ENCODE measurements at regions of chr13 and their contacts with region 1.

Region 1: DNA sequence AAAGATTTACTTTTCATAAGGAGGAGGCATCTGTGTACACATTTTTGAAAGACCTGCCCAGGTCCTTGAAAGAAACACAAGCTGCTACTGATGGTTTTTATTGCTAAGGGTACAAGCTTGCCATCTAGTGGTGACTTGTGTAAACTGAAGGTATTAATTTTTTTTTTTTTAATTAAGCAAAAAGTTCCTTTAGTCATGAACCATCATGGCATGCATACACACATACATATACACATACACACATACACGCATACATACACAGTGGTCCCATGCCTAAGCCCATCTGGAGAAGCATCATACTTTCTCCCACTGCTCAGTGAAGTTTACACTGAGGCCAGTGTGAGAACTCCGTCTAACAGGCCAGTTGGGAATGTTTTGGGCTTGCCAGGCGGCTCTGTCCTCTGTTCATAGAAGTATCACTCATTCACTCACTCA is 312.5 kb downstream of the DCLK1 start:
- DNase-seq: no peak
- ATAC-seq: peak; percentile 32; the same call in 1 of the 3 replicates
- H3K4me3 ChIP-seq: no peak overlapping the region
- H3K27ac ChIP-seq: no peak overlapping the region
- H3K4me1 ChIP-seq: no peaks in the 10 kb centered on the region
- H3K27me3 ChIP-seq: no peaks in the 10 kb centered on the region
- CTCF ChIP-seq: peak; percentile 48 to 60 (median 55)
- EP300 ChIP-seq: no peak
- POLR2A ChIP-seq: no peak
- RAD21 ChIP-seq: peak; percentile 35

Region 2: GRCh38 chr13:35807922-35808321 is 10.7 kb before region 1 on chr13:
- CTCF ChIA-PET with region 1: interaction called, 10 read pairs
- POLR2A ChIA-PET with region 1: no interaction called
- RAD21 ChIA-PET with region 1: interaction called, 3 read pairs
- SMC1A ChIA-PET with region 1: interaction called, 3 read pairs
- in situ Hi-C with region 1: no loop called
- intact Hi-C with region 1: no loop called
- DNase-seq: no peak
- ATAC-seq: no peak
- H3K4me3 ChIP-seq: no peak overlapping the region
- H3K27ac ChIP-seq: no peak overlapping the region
- H3K4me1 ChIP-seq: no peaks in the 10 kb centered on the region
- H3K27me3 ChIP-seq: no peaks in the 10 kb centered on the region
- CTCF ChIP-seq: no peak
- EP300 ChIP-seq: no peak
- POLR2A ChIP-seq: no peak
- RAD21 ChIP-seq: no peak

Region 3: DNA sequence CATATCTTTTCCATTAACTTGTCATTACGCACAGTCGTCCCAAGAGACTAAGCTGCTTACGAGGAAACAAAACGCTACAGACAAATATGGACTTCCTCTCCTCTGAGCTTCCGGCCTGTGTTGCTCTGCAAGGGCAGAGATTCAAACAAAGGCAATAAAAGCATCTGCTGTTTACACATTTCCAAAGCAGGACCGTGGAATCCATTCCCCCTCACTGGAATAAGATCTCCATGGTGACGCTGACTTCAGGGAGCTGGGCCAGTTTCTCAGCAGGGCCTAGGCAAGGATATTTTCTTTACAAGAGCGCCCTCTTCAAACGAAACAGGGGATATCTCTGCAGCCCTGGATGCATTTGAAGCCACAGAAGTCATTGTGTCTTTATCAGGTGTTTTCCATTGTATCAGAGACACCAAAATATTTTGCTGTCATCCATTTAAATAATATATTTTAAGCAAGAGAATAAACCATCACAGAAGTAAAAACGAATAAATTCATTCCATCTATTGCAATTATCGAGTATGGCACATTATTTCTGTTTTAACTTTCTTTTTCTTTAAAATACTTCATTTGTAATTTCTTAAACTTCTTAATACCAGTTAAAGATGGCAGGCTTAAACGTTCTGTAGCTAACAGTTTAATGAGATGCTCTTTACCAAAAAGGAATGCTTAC is 135.0 kb after region 1 on chr13:
- CTCF ChIA-PET with region 1: interaction called, 10 read pairs
- POLR2A ChIA-PET with region 1: no interaction called
- RAD21 ChIA-PET with region 1: interaction called, 5 read pairs
- SMC1A ChIA-PET with region 1: interaction called, 3 read pairs
- in situ Hi-C with region 1: no loop called
- intact Hi-C with region 1: no loop called
- DNase-seq: no peak
- ATAC-seq: peak; percentile 71
- H3K4me3 ChIP-seq: no peak overlapping the region
- H3K27ac ChIP-seq: no peak overlapping the region
- H3K4me1 ChIP-seq: no peaks in the 10 kb centered on the region
- H3K27me3 ChIP-seq: no peaks in the 10 kb centered on the region
- CTCF ChIP-seq: peak; percentile 10 to 31 (median 24); a peak in 4 of 6 replicates
- EP300 ChIP-seq: no peak
- POLR2A ChIP-seq: no peak
- RAD21 ChIP-seq: peak; percentile 19; the same call in 1 of the 2 replicates

Region 4: DNA sequence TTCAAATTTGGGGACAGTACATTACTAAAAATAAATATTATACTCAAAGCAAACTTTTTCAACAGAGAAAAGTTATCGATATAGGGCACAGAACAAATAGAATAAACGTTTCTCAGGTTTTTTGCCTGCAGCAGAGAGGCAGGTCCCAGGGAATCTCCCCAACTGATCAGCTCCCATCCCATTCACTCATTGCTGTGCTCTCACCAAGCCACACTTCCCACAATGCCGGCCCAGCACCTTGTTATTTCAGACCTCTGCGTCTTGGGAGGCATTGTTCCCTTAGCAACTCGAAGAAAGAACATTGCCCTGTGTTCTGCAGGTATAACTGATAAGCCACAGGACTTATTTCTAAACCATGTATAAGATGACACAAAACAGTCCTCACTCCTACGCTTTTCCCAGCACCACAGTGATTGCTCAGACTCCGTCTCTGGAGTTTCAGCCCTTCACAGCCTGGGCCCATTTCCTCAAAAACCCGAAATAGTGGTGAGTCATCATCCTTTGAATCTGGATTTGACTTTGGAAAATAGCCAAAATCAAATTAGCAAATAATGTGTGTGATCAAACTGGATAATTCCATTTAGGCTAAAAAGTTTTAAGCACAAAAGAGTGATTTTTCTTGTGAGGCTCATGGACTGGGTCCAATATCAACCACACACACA is 212.2 kb after region 1 on chr13:
- CTCF ChIA-PET with region 1: no interaction called
- POLR2A ChIA-PET with region 1: no interaction called
- RAD21 ChIA-PET with region 1: no interaction called
- SMC1A ChIA-PET with region 1: no interaction called
- in situ Hi-C with region 1: no loop called
- intact Hi-C with region 1: no loop called
- DNase-seq: no peak
- ATAC-seq: no peak; the same call in 2 of the 3 replicates
- H3K4me3 ChIP-seq: no peak overlapping the region
- H3K27ac ChIP-seq: no peak overlapping the region
- H3K4me1 ChIP-seq: no peaks in the 10 kb centered on the region
- H3K27me3 ChIP-seq: no peaks in the 10 kb centered on the region
- CTCF ChIP-seq: no peak
- EP300 ChIP-seq: no peak
- POLR2A ChIP-seq: no peak
- RAD21 ChIP-seq: no peak

Measured in GM12878 (cell line).